ENCODE measurements at regions of chr5 and their contacts with region 1.

Region 1: DNA sequence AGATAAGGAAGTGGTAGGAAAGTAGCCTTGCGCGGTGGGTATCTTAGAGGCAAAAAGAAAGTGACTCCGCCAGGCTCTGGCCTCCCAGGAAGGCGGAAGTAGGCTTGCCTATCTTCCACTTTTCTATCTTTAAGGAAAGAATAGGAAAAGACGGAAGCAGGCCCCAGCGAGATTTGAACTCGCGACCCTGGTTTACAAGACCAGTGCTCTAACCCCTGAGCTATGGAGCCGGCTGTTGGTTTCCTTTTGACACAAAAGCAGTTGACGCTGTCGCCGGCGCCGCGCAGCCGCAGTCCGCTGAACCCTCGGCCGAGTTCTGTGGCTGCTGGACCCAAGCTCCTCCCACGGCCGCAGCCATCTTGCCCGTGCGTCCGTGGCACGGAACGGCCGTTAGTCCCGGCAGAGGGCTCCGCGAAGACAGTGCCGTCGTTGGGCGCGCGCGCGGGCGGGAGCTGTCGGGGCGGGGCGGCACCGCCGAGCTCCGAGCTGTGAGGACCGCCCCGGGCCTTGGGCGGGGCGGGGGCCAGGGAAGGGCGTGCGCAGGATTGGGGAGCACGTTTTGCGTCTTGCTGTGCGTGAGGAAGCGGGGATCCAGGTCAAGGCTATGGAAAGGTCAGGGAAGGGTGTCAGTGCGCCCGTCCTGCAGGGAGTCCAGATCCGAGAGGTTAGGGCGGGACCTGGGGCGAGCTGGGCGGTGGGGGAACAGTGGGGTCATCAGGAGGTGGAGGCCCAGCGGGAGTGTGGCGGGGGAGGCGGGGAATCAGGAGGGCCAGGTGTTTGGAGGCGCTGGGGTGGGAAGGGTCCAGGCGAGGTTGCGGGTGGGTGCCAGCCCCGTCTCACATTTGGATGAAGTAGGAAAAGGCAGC is 13.2 kb downstream of the TRIM7 start:
- DNase-seq: peak; percentile 90 to 99 (median 96)
- ATAC-seq: peak; percentile 50
- H3K4me3 ChIP-seq: peak overlapping the region; percentile 88 to 90
- H3K4me3 Mint-ChIP-seq: peak overlapping the region; percentile 98
- H3K27ac ChIP-seq: peak overlapping the region; percentile 74 to 78
- H3K27ac Mint-ChIP-seq: peak overlapping the region; percentile 95
- H3K4me1 ChIP-seq: peaks cover 7% of the 10 kb centered on the region
- H3K4me1 Mint-ChIP-seq: peaks cover 23% of the 10 kb centered on the region
- H3K27me3 ChIP-seq: no peaks in the 10 kb centered on the region
- H3K27me3 Mint-ChIP-seq: no peaks in the 10 kb centered on the region
- CTCF ChIP-seq: no peak

Region 2: GRCh38 chr5:181207214-181208107 is 15.7 kb after region 1 on chr5:
- CTCF ChIA-PET with region 1: interaction called, 43 read pairs
- POLR2A ChIA-PET with region 1: interaction called, 158 read pairs
- intact Hi-C with region 1: loop called (anchors 1 kb)
- DNase-seq: peak in 8 of 9 experiments; percentile 46 to 92 (median 78)
- ATAC-seq: peak; percentile 69
- H3K4me3 ChIP-seq: peak overlapping the region; percentile 57 to 71
- H3K4me3 Mint-ChIP-seq: peak overlapping the region; percentile 88
- H3K27ac ChIP-seq: peak overlapping the region; percentile 59 to 64
- H3K27ac Mint-ChIP-seq: peak overlapping the region; percentile 85
- H3K4me1 ChIP-seq: peaks cover 29% of the 10 kb centered on the region
- H3K4me1 Mint-ChIP-seq: peaks cover 30% of the 10 kb centered on the region
- H3K27me3 ChIP-seq: no peaks in the 10 kb centered on the region
- H3K27me3 Mint-ChIP-seq: peaks cover 14% of the 10 kb centered on the region
- CTCF ChIP-seq: no peak

Region 3: GRCh38 chr5:181217111-181217802 is 25.5 kb after region 1 on chr5:
- CTCF ChIA-PET with region 1: interaction called, 23 read pairs
- POLR2A ChIA-PET with region 1: interaction called, 84 read pairs
- intact Hi-C with region 1: loop called (anchors 1 kb)
- DNase-seq: peak in 8 of 9 experiments; percentile 43 to 88 (median 73)
- ATAC-seq: peak; percentile 37
- H3K4me3 ChIP-seq: peak overlapping the region; percentile 61 to 76
- H3K4me3 Mint-ChIP-seq: peak overlapping the region; percentile 97
- H3K27ac ChIP-seq: peak overlapping the region; percentile 44 to 70
- H3K27ac Mint-ChIP-seq: peak overlapping the region; percentile 96
- H3K4me1 ChIP-seq: peaks cover 26% of the 10 kb centered on the region
- H3K4me1 Mint-ChIP-seq: peaks cover 46% of the 10 kb centered on the region
- H3K27me3 ChIP-seq: no peaks in the 10 kb centered on the region
- H3K27me3 Mint-ChIP-seq: no peaks in the 10 kb centered on the region
- CTCF ChIP-seq: no peak

Region 4: GRCh38 chr5:181243512-181244343 is 52.0 kb after region 1 on chr5 and contains the start of gene RACK1:
- CTCF ChIA-PET with region 1: interaction called, 3 read pairs
- POLR2A ChIA-PET with region 1: interaction called, 13 read pairs
- intact Hi-C with region 1: loop called (anchors 1 to 2 kb)
- DNase-seq: peak; percentile 79 to 94 (median 92)
- ATAC-seq: peak; percentile 72
- H3K4me3 ChIP-seq: peak within 1 kb of the TSS; percentile 76 to 89
- H3K4me3 Mint-ChIP-seq: peak within 1 kb of the TSS; percentile 95
- H3K27ac ChIP-seq: peak within 1 kb of the TSS; percentile 69 to 91
- H3K27ac Mint-ChIP-seq: peak within 1 kb of the TSS; percentile 99
- H3K4me1 ChIP-seq: peaks cover 42% of the 10 kb centered on the region
- H3K4me1 Mint-ChIP-seq: peaks cover 78% of the 10 kb centered on the region
- H3K27me3 ChIP-seq: no peaks in the 10 kb centered on the region
- H3K27me3 Mint-ChIP-seq: no peaks in the 10 kb centered on the region
- CTCF ChIP-seq: no peak
- total RNA-seq, gene RACK1: 2,370 to 2,438 TPM

Measured in CD8-positive, alpha-beta T cell (primary cell).